ENCODE measurements at regions of chr1 and their contacts with region 1.

Region 1: GRCh38 chr1:243343970-243344937 is 88.4 kb downstream of the SDCCAG8 start:
- H3K4me3 ChIP-seq: no peak overlapping the region
- H3K27ac ChIP-seq: no peak overlapping the region
- H3K4me1 ChIP-seq: no peaks in the 10 kb centered on the region
- CTCF ChIP-seq: peak; percentile 64

Region 2: DNA sequence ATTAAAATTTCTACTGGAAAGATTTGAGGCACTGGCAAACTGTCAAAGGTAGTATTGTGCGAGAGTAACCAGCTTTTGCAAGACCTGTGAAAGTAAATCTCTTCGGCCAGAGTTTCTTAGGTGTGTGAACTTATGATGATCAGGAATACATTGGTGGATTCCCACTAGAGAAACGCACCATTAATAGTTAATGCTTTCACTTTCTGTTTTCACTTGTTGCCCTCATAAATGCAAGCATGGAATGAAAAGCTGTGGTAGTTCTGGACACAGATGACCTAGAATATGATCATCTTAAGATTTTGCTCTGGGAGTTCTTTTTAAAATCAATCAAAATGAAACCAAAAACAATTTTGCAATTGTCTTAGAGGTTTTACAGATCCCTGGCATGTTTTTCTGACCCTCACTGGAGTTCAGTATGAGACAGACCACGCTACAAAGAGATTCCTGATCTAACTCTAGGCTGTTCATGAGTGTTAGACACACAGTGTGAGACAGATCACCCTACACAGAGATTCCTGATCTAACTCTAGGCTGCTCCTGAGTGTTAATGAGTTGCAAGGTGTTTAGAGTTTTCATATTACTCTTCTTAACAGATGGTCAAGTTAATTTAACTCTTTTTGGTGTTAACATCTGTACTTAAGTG is 10.4 kb after region 1 on chr1:
- CTCF ChIA-PET with region 1: interaction called, 28 read pairs
- POLR2A ChIA-PET with region 1: no interaction called
- H3K4me3 ChIP-seq: no peak overlapping the region
- H3K27ac ChIP-seq: no peak overlapping the region
- H3K4me1 ChIP-seq: no peaks in the 10 kb centered on the region
- CTCF ChIP-seq: no peak

Region 3: DNA sequence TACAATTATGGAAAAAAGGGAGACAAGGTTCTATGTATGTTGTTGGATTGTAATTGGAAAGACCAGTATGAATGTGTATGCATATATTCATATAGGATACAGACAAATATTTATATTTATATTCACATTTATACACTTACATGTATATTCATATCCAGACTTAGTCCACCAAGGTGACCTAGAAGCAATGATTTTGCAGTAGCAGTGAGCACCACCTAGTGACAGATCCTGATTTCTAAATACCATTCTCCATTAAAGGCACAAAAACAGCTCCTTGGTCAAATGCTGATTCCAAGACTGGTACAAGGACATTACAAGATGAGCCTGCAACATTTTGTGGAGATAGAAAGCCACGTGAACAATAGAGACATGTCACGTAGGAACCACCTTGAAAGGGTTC is 65.0 kb after region 1 on chr1:
- CTCF ChIA-PET with region 1: interaction called, 17 read pairs
- POLR2A ChIA-PET with region 1: no interaction called
- H3K4me3 ChIP-seq: no peak overlapping the region
- H3K27ac ChIP-seq: no peak overlapping the region
- H3K4me1 ChIP-seq: no peaks in the 10 kb centered on the region
- CTCF ChIP-seq: no peak

Region 4: DNA sequence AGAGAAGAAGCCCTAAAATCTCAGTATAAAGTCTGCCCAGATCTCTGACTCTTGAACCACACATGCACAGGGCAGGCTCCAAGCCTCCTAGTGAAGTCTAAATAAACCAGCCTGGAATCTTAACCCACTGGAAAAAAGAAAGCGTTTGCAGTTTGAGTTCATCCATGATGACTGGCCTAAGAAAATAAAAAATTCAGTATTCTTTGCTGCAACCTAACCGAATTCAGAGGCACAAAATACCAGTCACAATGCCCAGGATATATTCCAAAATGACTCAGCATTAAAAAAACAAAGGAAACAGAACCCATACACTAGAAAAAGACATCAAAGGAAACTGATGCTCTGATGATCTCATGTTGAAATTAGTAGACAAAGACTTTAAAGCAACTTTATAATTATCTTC is 180.8 kb after region 1 on chr1:
- CTCF ChIA-PET with region 1: no interaction called
- POLR2A ChIA-PET with region 1: no interaction called
- H3K4me3 ChIP-seq: no peak overlapping the region
- H3K27ac ChIP-seq: no peak overlapping the region
- H3K4me1 ChIP-seq: 0 out of 2 replicates have a peak, but pooled peaks cover 3% of the 10 kb centered on the region
- CTCF ChIP-seq: no peak

Region 5: DNA sequence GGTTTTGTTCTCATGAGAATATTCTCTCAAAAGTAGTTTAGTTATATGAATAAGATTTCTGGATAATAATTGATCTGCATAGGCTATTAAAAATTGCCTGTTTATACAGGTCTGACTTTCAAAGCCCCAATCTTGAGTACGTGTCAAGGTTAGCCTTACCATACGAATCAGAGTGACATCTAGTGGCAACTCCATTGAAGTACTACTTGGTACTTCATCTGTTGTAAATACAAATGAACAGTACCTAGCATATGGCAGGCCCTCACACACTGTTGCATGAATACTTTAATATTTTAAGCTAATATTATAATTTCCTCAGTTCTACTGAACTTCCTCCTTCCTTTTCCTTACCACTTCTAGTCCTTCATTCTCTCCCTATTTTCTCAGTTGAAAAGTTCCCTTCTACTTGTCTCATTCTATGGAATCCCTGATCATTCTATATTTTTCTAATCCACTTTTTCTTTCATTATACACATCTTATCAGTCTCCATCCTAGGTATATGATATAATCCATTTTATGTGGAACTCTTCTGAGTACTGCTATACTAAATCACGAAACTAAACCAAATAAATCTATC is 404.5 kb after region 1 on chr1:
- CTCF ChIA-PET with region 1: interaction called, 23 read pairs
- POLR2A ChIA-PET with region 1: no interaction called
- H3K4me3 ChIP-seq: no peak overlapping the region
- H3K27ac ChIP-seq: no peak overlapping the region
- H3K4me1 ChIP-seq: no peaks in the 10 kb centered on the region
- CTCF ChIP-seq: peak; percentile 63

Region 6: DNA sequence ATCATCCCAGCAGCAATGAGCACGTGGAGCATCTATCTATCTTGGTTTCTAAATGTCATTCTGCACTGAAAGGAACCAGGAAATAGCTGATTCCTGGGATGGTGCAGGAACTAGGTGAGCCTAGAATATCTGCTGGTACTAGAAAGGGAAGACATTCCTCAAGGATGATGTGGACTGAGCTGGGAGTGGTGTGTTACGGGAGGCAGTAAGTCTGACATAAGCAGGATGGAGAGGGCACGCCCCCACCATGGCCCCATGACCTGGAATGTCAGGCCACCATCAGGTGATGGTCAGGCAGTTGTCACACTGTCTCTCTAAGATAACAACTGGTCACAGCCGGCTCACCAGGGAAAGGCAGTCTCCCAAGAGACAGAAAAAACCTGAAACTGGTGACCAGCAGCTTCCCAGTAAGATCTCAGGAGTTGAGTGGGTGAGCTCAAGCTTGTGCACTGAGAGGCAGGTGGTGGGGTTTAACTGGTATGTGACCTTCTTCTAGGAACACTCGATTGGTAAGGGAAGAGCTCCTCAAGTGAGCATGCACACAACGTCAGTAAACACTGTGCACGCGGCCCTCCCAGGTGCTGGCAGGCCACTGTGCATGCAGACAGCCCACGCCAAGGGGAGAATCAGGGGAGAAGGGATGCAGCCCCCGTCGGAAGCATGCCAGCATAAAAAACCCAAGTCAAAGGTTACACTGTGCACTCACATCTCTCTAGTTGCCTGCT is 958.8 kb after region 1 on chr1:
- CTCF ChIA-PET with region 1: interaction called, 13 read pairs
- POLR2A ChIA-PET with region 1: no interaction called
- H3K4me3 ChIP-seq: no peak overlapping the region
- H3K27ac ChIP-seq: no peak overlapping the region
- H3K4me1 ChIP-seq: no peaks in the 10 kb centered on the region
- CTCF ChIP-seq: no peak

Measured in HEK293 (cell line).